Pancreas (tissue), 10 donors: ENCODE measurements at regions of chr7 and their contacts with region 1.

Region 1: DNA sequence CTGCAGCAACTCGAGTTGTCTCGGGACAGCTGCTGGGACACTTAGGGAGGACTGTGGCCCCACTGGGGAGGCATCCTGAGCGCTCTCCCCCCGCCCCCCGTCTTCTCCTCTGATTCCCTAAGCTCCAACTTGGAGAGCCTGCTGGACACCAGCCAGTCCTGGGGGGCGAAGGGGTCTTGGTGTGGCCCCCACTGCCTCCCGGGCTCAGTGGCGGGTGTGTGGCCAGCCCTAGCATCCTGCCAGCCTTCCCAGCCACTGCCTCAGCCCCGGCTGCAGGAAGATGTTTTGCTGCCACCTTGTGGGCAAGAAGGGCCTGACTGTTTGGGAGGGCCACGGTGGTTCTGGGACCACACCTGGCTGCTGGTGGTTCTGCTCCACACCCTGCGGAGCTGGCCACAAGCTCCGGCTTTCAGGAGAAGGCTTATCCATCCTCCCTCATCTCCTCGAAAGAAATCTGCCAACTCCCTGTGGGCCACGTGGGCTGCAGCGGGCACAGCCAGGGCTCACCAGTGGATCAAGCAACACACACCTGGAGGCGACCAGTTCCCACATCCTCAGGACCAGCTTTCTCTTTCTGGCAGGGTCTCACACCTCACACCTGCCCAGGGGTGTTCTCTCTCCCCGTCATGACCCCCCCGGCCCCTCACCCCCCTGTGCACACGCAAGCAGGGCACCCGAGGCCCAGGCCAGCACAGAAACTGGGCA is 24.8 kb downstream of the AGAP3 start:
- DNase-seq: peak; percentile 68 to 93 (median 84)
- ATAC-seq: peak; percentile 78 to 90 (median 82)
- H3K4me3 ChIP-seq: no peak overlapping the region
- H3K27ac ChIP-seq: peak overlapping the region in 3 of 4 donors; percentile 12 to 55 (median 37)
- H3K4me1 ChIP-seq: peaks cover 4 to 20% (median 13%) of the 10 kb centered on the region in 3 donors
- H3K27me3 ChIP-seq: no peaks in the 10 kb centered on the region
- CTCF ChIP-seq: peak; percentile 83 to 93 (median 89)

Region 2: GRCh38 chr7:150620617-150621371 is 490.3 kb before region 1 on chr7:
- intact Hi-C with region 1: no loop called
- DNase-seq: no peak
- ATAC-seq: no peak
- H3K4me3 ChIP-seq: no peak overlapping the region
- H3K27ac ChIP-seq: no peak overlapping the region
- H3K4me1 ChIP-seq: no peaks in the 10 kb centered on the region
- H3K27me3 ChIP-seq: no peaks in the 10 kb centered on the region
- CTCF ChIP-seq: no peak

Region 3: GRCh38 chr7:150787321-150788281 is 323.5 kb before region 1 on chr7:
- intact Hi-C with region 1: no loop called
- DNase-seq: no peak
- ATAC-seq: peak in 3 of 4 donors; percentile 43 to 48 (median 45)
- H3K4me3 ChIP-seq: no peak overlapping the region
- H3K27ac ChIP-seq: peak overlapping the region in 2 of 4 donors; percentile 28 to 60
- H3K4me1 ChIP-seq: peaks cover 0 to 12% (median 0%) of the 10 kb centered on the region in 3 donors
- H3K27me3 ChIP-seq: no peaks in the 10 kb centered on the region
- CTCF ChIP-seq: no peak

Region 4: GRCh38 chr7:151032936-151033863 is 77.9 kb before region 1 on chr7:
- intact Hi-C with region 1: loop called in 1 of 3 experiments (anchors 5 kb)
- DNase-seq: peak in 1 of 6 donors; percentile 65
- ATAC-seq: no peak
- H3K4me3 ChIP-seq: no peak overlapping the region
- H3K27ac ChIP-seq: no peak overlapping the region
- H3K4me1 ChIP-seq: peaks cover 0 to 3% (median 0%) of the 10 kb centered on the region in 3 donors
- H3K27me3 ChIP-seq: no peaks in the 10 kb centered on the region
- CTCF ChIP-seq: no peak